Activated T-helper 1 cell treated with anti-CD3 and anti-CD28 coated beads, Interleukin-12 subunit alpha, Interleukin-12 subunit beta, Interleukin-2, Interleukin-4 antibody, amounts not matched to agents 30 ng/mL and 10 ng/mL and 1 ng/mL, durations not matched to agents 14 hours and 24 hours and 36 hours (primary cell): ENCODE measurements at regions of chr6 and their contacts with region 1.

Region 1: DNA sequence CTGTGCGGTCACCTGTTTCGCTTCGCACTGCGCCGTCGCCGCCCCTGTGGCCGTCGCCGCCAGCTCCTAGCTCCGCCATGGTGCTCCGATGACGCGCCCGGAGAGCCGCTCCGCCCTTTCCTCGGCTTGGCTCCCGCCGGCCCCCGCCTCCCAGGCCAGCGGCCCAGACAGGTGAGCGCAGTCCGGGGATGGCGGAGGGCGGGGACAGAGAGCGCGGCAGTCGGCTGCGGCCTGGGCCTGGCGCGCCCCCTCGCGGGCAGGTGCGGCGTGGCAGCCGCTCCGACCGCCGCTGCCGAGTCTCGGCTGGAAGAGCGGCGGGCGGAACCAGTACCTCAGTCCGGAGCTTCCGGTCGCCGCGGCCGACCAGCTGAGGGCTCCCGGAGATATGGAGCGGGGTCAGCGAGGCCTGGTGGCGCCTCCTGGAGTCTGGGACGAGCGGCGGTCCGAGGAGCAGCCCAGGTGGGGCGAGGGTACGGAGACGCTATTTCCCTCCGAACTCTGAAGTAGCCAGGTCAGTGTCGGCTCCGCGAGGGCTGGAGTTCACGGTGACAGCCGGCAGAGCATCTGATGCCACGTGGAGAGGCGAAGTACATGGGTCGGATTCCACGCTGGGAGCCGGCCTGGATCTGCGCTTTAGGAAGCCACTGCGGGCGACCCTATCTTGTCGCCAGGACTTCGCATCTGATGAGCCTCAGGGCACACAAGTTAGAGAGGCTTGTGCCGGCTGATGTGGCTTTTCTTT is at the start of gene MAP7:
- DNase-seq: peak; percentile 53
- H3K4me3 Mint-ChIP-seq: peak within 1 kb of the TSS; percentile 74
- H3K27ac Mint-ChIP-seq: no peak within 1 kb of the TSS
- H3K4me1 Mint-ChIP-seq: peaks cover 15% of the 10 kb centered on the region
- H3K27me3 Mint-ChIP-seq: peaks cover 48% of the 10 kb centered on the region
- total RNA-seq, gene MAP7: 1.7 and 2.3 TPM in 2 replicates

Region 2: GRCh38 chr6:136378886-136379285 is 171.6 kb before region 1 on chr6:
- intact Hi-C with region 1: loop called (anchors 5 kb)
- DNase-seq: no peak
- H3K4me3 Mint-ChIP-seq: no peak overlapping the region
- H3K27ac Mint-ChIP-seq: no peak overlapping the region
- H3K4me1 Mint-ChIP-seq: no peaks in the 10 kb centered on the region
- H3K27me3 Mint-ChIP-seq: peaks cover 5% of the 10 kb centered on the region

Region 3: GRCh38 chr6:136503303-136504029 is 47.0 kb before region 1 on chr6:
- intact Hi-C with region 1: no loop called
- DNase-seq: no peak
- H3K4me3 Mint-ChIP-seq: no peak overlapping the region
- H3K27ac Mint-ChIP-seq: no peak overlapping the region
- H3K4me1 Mint-ChIP-seq: no peaks in the 10 kb centered on the region
- H3K27me3 Mint-ChIP-seq: no peaks in the 10 kb centered on the region

Region 4: DNA sequence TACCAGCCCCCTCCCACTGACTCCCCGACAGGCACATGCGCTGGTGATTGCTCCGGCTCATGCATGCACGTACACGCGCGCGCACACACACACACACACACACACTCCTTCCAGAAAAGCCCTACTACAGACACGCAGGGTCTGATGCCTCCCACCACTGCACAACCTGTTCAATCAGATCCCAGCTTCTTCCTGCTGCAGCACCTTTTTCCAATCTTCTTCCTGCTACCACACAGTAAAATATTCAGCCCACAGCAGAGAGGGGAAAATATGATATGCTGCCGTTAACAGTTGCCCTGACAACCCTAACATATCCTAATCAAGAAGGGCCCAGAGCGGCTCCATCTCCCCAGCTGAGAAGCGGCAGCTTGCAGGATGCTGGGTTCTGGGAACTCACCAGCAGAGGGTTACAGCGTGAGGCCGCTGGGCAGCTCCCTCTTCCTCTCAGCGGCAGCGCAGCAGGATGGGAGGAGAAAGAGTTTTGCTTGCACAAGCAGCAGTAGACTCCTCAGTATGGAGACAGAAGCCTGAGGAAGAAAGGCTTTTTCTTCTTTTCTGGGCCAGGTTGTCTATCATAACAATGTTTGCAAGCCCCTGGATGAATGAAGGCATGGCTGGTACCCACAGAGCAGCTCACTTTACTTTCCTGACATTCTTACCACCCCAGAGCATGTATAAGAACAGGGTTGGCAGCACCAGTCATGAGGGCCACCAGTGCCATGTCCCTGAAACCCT is 24.1 kb before region 1 on chr6:
- intact Hi-C with region 1: loop called (anchors 2 kb)
- DNase-seq: peak; percentile 26
- H3K4me3 Mint-ChIP-seq: peak overlapping the region; percentile 56
- H3K27ac Mint-ChIP-seq: no peak overlapping the region
- H3K4me1 Mint-ChIP-seq: peaks cover 24% of the 10 kb centered on the region
- H3K27me3 Mint-ChIP-seq: peaks cover 10% of the 10 kb centered on the region

Region 5: DNA sequence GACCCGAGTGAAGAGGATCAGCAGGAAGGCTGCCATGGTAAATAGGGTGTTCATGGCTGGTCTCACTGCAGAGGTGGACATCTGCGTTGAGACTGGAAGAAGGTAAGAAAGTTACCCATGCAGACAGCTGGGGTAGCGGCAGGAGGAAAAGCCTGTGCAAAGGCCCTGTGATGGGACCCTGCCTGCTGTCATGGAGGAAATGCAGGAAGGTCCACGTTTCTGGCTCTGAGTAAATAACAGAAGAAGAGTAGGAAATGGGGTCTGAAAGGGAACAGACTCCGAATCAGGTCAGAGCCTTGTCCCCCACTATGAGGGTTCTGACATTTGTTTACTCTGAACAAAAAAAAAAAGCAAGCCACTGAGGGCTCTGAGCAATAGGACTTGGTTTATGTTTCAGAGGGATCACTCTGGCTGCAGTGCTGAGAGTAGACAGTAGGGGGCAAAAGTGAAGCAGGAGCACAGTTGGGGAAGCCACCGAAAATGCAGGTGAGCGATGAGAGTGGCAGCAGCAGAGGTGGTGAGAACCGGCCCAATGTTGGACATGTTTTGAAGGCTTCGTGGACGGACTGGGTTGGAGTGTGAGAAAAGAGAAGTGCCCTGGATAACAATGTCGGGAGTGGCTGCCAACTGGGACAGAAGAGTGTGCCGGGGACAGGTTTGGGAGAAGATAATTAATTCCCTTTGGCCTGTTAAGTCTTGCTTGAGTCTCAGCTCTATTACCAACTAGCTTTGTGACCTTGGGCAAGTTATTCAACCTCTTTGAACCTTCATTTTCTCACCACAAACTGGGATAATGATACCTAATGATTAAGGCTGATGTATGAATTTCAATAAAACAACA is 57.7 kb after region 1 on chr6:
- intact Hi-C with region 1: no loop called
- DNase-seq: peak; percentile 71
- H3K4me3 Mint-ChIP-seq: no peak overlapping the region
- H3K27ac Mint-ChIP-seq: peak overlapping the region; percentile 30
- H3K4me1 Mint-ChIP-seq: peaks cover 28% of the 10 kb centered on the region
- H3K27me3 Mint-ChIP-seq: no peaks in the 10 kb centered on the region